Left ventricle myocardium inferior (tissue), 1 donor: ENCODE measurements at regions of chr7 and their contacts with region 1.

Region 1: GRCh38 chr7:39741942-39742623 is 118.7 kb downstream of the RALA start:
- DNase-seq: peak; percentile 47
- H3K4me3 ChIP-seq: no peak overlapping the region
- H3K27ac ChIP-seq: no peak overlapping the region
- H3K4me1 ChIP-seq: no peaks in the 10 kb centered on the region
- H3K27me3 ChIP-seq: no peaks in the 10 kb centered on the region
- CTCF ChIP-seq: peak; percentile 67

Region 2: DNA sequence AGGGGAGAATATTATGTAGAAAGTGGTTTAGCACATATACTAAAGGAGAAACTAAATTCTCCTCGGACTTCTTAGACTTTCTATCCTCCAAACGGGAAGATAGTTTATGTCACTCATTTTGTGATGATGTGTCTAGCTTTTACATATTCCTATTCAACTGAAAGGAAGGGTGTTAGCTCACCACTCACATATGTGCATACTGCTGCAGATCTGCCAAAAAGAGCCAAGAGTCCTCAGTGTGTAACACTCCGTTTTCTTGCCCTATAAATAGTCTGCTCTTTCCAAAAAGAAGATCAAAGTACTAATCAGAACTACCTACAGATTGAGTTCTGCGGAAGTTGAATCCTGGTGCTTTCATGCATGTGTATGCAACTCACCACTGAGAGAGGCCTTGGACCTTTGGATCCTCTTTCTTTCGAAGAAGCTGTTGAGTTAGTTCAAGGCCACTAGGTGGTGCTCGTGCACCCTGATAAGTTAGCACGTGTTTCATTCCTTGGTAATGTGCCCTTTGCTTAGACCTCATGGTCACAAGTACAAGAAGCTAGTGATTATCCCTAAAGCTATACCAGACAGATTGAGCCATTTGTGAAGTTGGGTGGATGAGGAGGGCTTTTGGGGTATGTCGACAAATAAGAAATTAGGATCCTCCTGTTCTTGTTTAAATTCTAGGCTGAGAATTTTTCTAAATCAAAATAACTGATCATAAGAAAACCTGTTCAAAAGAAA is 161.8 kb before region 1 on chr7:
- intact Hi-C with region 1: loop called (anchors 2 kb)
- DNase-seq: peak; percentile 70
- H3K4me3 ChIP-seq: no peak overlapping the region
- H3K27ac ChIP-seq: no peak overlapping the region
- H3K4me1 ChIP-seq: peaks cover 5% of the 10 kb centered on the region
- H3K27me3 ChIP-seq: no peaks in the 10 kb centered on the region
- CTCF ChIP-seq: peak; percentile 90

Region 3: DNA sequence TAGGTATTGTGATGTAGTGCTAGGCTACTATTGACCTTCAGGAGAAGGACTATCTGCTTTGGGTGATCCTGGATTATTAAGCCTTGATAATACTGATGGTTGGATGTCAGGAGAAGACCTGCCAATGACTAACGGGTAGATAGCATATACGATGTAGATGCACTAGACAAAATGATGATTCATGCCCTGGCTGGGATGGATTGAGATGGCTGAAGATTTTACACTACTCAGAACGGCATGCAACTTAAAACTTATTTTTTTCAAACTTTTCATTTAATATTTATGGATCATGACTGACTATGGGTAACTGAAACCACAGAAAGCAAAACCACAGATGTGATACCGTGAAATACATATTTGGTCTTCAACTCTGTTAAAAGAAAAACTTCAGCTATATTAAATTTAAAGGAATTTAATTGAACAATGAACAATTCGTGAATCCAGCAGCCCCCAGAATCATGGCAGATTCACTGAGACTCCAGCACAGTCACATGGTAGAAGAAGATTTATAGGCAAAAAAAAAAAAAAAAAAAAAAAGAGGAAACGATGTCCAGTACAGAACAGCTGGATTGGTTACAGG is 83.4 kb after region 1 on chr7:
- intact Hi-C with region 1: no loop called
- DNase-seq: no peak
- H3K4me3 ChIP-seq: no peak overlapping the region
- H3K27ac ChIP-seq: no peak overlapping the region
- H3K4me1 ChIP-seq: no peaks in the 10 kb centered on the region
- H3K27me3 ChIP-seq: peaks cover 11% of the 10 kb centered on the region
- CTCF ChIP-seq: no peak